IMR-90 (cell line): ENCODE measurements at regions of chr9 and their contacts with region 1.

Region 1: DNA sequence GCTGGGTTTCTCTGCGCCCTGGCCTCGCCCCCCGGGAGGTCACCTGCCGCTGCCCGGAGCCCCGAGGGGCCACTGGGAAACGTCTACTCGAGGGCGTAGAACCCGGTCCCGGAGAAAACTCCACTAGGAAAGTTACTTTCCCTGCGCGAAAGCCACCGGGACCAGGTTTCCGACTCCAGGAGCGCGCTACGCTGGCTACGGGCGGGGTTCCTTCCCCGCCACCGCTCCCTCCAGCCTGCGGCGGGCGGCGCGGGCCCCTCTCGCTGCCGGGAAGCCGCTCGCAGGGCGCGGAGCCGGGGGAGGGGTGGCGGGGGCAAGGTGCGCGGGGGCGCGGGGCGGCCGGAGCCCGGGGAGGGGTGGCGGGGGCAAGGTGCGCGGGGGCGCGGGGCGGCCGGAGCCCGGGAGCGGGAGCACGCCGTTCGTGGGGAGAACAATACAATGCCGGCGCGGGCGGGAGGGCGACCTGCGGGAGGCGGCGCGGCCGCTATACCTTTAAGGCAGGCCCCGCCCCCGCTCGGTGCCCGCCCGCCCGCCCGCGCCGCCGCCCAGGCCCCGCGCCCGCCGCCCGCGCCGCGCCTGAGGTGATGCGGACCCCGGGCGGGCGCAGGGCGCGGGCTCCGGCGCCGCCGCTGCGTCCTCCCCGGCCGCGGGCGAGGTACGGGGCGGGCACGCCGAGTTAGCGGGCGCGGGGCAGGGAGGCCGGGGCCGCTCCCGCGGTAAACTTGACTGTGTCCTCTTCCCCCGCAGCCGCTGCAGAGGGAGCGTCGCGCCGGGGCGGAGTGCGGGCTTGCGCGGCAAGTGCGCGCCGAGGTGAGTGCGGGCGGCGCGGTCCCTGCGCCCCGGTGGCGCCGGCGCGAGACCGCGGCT is 278.1 kb downstream of the AOPEP start:
- DNase-seq: no peak
- ATAC-seq: peak; percentile 70
- H3K4me3 ChIP-seq: peak overlapping the region; percentile 92
- H3K27ac ChIP-seq: peak overlapping the region; percentile 99
- H3K4me1 ChIP-seq: peaks cover 3% of the 10 kb centered on the region; the same call in 1 of the 2 replicates
- H3K27me3 ChIP-seq: no peaks in the 10 kb centered on the region
- CTCF ChIP-seq: no peak
- POLR2A ChIP-seq: no peak; the same call in none of the 2 replicates
- RAD21 ChIP-seq: no peak

Region 2: GRCh38 chr9:94681508-94681907 is 323.1 kb before region 1 on chr9:
- CTCF ChIA-PET with region 1: interaction called, 3 read pairs
- POLR2A ChIA-PET with region 1: no interaction called
- dilution Hi-C with region 1: no loop called
- in situ Hi-C with region 1: loop called (anchors 10 kb)
- intact Hi-C with region 1: loop called (anchors 2 kb)
- DNase-seq: peak; percentile 80
- ATAC-seq: peak; percentile 99
- H3K4me3 ChIP-seq: no peak overlapping the region
- H3K27ac ChIP-seq: no peak overlapping the region
- H3K4me1 ChIP-seq: no peaks in the 10 kb centered on the region; the same call in 1 of the 2 replicates
- H3K27me3 ChIP-seq: no peaks in the 10 kb centered on the region; the same call in 1 of the 2 replicates
- CTCF ChIP-seq: peak; percentile 85
- POLR2A ChIP-seq: no peak
- RAD21 ChIP-seq: peak; percentile 92

Region 3: DNA sequence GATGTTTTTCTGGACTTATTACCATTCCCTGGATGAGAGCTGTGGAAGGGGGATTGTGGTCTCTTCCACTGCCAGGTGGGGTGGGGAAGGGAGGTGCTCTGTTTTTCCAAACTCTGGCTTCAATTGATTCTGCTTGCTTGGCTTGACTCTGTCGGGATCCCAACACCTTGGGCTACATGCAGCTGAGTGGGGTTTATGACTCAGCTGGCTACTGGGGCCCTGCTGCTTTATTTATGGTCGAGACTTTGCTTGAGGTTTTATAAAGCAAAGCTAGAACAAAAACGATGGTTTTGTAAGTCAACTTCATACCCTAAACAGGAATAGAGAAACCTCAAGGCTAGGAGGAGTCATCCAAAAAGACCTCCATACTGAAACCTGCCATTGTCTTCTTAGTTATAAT is 201.9 kb before region 1 on chr9:
- CTCF ChIA-PET with region 1: no interaction called
- POLR2A ChIA-PET with region 1: no interaction called
- dilution Hi-C with region 1: no loop called
- in situ Hi-C with region 1: no loop called
- intact Hi-C with region 1: loop called (anchors 5 kb)
- DNase-seq: peak; percentile 76
- ATAC-seq: peak; percentile 33
- H3K4me3 ChIP-seq: no peak overlapping the region
- H3K27ac ChIP-seq: no peak overlapping the region
- H3K4me1 ChIP-seq: peaks cover 19% of the 10 kb centered on the region
- H3K27me3 ChIP-seq: peaks cover 8% of the 10 kb centered on the region
- CTCF ChIP-seq: no peak
- POLR2A ChIP-seq: no peak
- RAD21 ChIP-seq: no peak

Region 4: GRCh38 chr9:94900222-94901018 is 104.2 kb before region 1 on chr9:
- CTCF ChIA-PET with region 1: no interaction called
- POLR2A ChIA-PET with region 1: no interaction called
- dilution Hi-C with region 1: no loop called
- in situ Hi-C with region 1: no loop called
- intact Hi-C with region 1: loop called (anchors 5 kb)
- DNase-seq: peak; percentile 97
- ATAC-seq: peak; percentile 75
- H3K4me3 ChIP-seq: peak overlapping the region; percentile 27; the same call in 1 of the 2 replicates
- H3K27ac ChIP-seq: peak overlapping the region; percentile 99
- H3K4me1 ChIP-seq: peaks cover 21% of the 10 kb centered on the region
- H3K27me3 ChIP-seq: no peaks in the 10 kb centered on the region
- CTCF ChIP-seq: no peak
- POLR2A ChIP-seq: 0 out of 2 replicates have a peak, but pooled peaks have one; percentile 43
- RAD21 ChIP-seq: peak; percentile 29; the same call in 1 of the 2 replicates

Region 5: GRCh38 chr9:95037789-95038517 is 33.3 kb after region 1 on chr9:
- CTCF ChIA-PET with region 1: no interaction called
- POLR2A ChIA-PET with region 1: no interaction called
- dilution Hi-C with region 1: no loop called
- in situ Hi-C with region 1: no loop called
- intact Hi-C with region 1: no loop called
- DNase-seq: no peak
- ATAC-seq: no peak
- H3K4me3 ChIP-seq: no peak overlapping the region
- H3K27ac ChIP-seq: no peak overlapping the region
- H3K4me1 ChIP-seq: peaks cover 16% of the 10 kb centered on the region
- H3K27me3 ChIP-seq: no peaks in the 10 kb centered on the region
- CTCF ChIP-seq: no peak
- POLR2A ChIP-seq: no peak
- RAD21 ChIP-seq: no peak

Region 6: DNA sequence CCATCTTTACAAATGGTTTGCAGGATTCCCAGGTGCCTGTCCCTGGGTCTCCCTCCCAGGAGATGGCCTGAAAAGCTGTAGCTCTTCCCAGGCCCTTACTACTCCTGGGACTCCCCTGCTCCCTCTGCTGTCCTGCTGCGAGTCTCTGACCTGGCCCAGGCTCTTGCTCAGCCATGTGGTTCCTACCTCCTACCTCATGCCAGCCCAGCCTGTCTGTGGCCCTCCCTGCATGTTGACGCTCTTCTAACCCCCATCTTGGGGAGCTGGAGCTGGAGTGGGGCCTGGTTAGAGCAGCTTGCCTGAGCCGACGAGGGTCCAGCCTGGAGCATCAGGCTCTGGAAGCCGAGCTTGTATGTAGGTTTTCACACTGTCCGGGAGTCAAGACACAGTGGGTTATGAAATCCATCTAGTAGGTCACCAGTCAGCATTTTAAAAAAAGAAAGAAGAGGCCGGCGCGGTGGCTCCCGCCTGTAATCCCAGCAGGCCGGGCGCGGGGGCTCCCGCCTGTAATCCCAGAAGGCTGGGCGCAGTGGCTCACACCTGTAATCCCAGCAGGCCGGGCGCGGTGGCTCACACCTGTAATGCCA is 68.5 kb after region 1 on chr9:
- CTCF ChIA-PET with region 1: no interaction called
- POLR2A ChIA-PET with region 1: no interaction called
- dilution Hi-C with region 1: no loop called
- in situ Hi-C with region 1: no loop called
- intact Hi-C with region 1: no loop called
- DNase-seq: no peak
- ATAC-seq: peak; percentile 68
- H3K4me3 ChIP-seq: no peak overlapping the region
- H3K27ac ChIP-seq: no peak overlapping the region
- H3K4me1 ChIP-seq: peaks cover 17% of the 10 kb centered on the region
- H3K27me3 ChIP-seq: no peaks in the 10 kb centered on the region
- CTCF ChIP-seq: peak; percentile 35
- POLR2A ChIP-seq: no peak
- RAD21 ChIP-seq: peak; percentile 30; the same call in 1 of the 2 replicates

Region 7: DNA sequence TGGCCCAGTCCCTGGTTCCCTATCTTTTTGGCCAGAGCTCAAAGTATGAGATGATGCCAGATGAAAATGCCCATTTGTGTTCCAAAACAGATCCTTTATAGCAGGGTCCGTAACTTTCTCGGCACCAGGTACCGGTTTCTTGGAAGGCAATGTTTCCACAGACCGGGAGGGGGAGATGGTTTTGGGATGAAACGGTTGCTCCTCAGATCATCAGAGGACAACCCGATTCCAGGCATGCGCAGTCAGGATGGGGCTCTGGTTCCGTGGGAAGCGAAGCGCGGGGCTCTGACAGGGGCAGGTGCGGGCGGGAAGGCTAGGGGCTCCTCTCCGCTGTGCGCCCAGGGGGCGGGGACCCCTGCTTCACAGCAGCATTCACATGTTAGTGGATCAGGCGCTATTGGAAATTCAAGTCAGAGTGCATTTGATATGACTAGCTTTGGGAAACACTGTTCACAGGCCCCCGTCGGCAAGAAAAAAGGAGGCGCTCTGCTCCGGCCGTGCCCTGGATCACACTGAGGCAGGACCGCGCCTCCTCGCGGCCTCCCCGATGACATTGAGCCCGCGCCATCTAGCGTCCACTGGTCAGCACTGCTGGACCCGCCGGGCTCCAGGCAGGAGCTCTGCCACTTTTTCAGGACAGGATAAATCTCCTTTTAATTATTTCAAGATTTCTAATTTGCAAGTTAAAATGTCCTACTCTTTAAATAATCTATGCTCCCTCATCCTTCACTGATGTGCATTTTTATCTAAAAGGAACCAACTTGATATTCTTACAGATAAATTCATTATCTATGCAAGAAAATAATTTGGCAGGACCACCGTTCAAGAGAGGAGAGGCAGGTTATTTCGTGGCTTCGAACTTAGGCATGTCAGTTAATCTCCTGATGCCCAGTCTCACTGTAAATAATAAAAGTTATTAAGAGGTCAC is 122.9 kb after region 1 on chr9:
- CTCF ChIA-PET with region 1: no interaction called
- POLR2A ChIA-PET with region 1: no interaction called
- dilution Hi-C with region 1: no loop called
- in situ Hi-C with region 1: no loop called
- intact Hi-C with region 1: loop called (anchors 2 kb)
- DNase-seq: peak; percentile 71
- ATAC-seq: peak; percentile 99
- H3K4me3 ChIP-seq: peak overlapping the region; percentile 27; the same call in 1 of the 2 replicates
- H3K27ac ChIP-seq: no peak overlapping the region
- H3K4me1 ChIP-seq: peaks cover 2% of the 10 kb centered on the region; the same call in 1 of the 2 replicates
- H3K27me3 ChIP-seq: no peaks in the 10 kb centered on the region
- CTCF ChIP-seq: peak; percentile 99
- POLR2A ChIP-seq: no peak
- RAD21 ChIP-seq: peak; percentile 87